B cell (primary cell): ENCODE measurements at regions of chr6 and their contacts with region 1.

Region 1: DNA sequence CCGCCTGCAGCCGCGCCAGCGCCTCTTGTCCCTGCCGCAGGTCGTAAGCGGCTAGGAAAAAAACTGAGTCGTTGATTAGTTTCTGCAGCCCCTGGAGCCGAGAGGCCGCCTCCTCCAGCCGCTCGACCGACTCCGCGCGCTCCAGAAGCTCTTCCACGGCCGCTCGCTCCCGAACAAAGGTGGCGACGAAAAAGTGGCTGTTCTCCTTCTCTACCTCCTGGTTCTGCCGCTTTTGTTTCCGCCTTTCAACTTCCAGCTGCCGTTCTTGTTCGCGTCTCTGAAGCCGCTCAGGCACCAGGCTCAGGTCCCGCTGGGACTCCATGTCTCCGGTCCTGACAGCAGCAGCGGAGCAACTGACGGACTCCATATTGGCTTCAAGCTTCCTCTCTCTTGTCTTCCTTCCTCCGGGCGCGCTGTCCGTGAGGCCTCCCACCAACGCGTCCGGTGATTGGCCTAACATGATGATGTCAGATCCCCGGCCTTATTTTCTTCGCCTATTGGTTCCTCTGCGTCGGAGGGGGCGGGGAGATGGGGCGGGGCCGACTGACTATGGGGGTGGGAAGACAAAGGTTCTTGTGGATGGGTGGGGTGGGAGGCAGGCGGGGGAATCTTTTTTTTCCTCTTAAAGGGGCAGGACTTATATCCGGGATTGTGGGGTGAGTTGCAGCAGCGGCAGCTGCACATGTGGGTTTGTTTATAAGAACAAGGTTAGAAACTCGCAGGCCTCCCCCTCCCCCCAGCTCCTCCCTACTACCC is at the start of gene TBCC:
- DNase-seq: peak; percentile 96
- ATAC-seq: peak; percentile 74
- H3K4me3 ChIP-seq: peak within 1 kb of the TSS; percentile 81 to 100 (median 90)
- H3K4me3 Mint-ChIP-seq: peak within 1 kb of the TSS; percentile 100
- H3K27ac ChIP-seq: peak within 1 kb of the TSS; percentile 78 to 91
- H3K27ac Mint-ChIP-seq: peak within 1 kb of the TSS; percentile 100
- H3K4me1 ChIP-seq: peaks cover 21 to 28% of the 10 kb centered on the region in 2 donors
- H3K4me1 Mint-ChIP-seq: peaks cover 35% of the 10 kb centered on the region
- H3K27me3 ChIP-seq: no peaks in the 10 kb centered on the region
- H3K27me3 Mint-ChIP-seq: no peaks in the 10 kb centered on the region
- CTCF ChIP-seq: no peak
- total RNA-seq, gene TBCC: 54.6 and 55.7 TPM in 2 replicates

Region 2: DNA sequence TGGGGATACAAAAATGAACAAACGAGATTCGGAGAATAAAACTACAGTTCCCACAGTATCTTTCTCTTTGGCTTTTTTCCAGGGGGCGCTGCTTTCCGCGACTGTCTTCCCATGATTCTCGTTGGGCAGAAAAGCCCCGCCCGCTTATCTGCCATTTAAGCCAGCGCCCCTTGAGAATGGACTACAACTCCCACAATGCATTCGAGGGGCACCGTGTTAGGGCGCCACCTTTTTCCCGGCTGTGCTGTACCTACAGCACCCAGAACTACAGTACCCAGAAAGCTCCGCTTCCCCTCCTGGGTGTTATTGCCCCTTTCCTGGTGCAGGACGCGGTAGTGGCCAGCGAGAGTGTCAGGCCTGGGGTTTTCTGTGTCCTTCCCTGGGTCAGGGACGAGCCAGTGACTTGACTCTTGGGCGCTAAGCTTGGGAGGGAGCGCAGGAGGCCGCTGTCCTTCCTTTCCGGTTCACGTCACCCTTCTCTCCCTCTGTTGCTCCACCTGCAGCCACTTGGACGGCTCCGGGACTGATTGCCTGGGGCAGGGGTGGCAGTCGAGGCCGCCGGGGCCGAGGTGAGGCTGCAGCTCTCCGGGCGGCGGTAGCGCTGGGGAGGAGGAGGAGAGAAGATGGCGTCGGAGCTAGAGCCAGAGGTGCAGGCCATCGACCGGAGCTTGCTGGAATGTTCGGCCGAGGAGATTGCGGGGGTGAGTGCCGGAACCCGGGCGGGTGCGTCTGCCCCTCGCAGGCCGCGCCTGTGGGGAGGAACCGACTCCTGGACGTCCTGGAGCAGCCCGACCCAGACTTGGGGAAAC is 182.0 kb before region 1 on chr6 and contains the start of gene UBR2:
- CTCF ChIA-PET with region 1: no interaction called
- POLR2A ChIA-PET with region 1: no interaction called
- intact Hi-C with region 1: loop called (anchors 2 kb)
- DNase-seq: peak; percentile 95
- ATAC-seq: peak; percentile 96
- H3K4me3 ChIP-seq: peak within 1 kb of the TSS; percentile 78 to 98 (median 91)
- H3K4me3 Mint-ChIP-seq: peak within 1 kb of the TSS; percentile 98
- H3K27ac ChIP-seq: peak within 1 kb of the TSS; percentile 90 to 91
- H3K27ac Mint-ChIP-seq: peak within 1 kb of the TSS; percentile 98
- H3K4me1 ChIP-seq: peaks cover 19 to 25% of the 10 kb centered on the region in 2 donors
- H3K4me1 Mint-ChIP-seq: peaks cover 36% of the 10 kb centered on the region
- H3K27me3 ChIP-seq: no peaks in the 10 kb centered on the region
- H3K27me3 Mint-ChIP-seq: no peaks in the 10 kb centered on the region
- CTCF ChIP-seq: peak; percentile 41
- total RNA-seq, gene UBR2: 56.2 and 61.5 TPM in 2 replicates

Region 3: DNA sequence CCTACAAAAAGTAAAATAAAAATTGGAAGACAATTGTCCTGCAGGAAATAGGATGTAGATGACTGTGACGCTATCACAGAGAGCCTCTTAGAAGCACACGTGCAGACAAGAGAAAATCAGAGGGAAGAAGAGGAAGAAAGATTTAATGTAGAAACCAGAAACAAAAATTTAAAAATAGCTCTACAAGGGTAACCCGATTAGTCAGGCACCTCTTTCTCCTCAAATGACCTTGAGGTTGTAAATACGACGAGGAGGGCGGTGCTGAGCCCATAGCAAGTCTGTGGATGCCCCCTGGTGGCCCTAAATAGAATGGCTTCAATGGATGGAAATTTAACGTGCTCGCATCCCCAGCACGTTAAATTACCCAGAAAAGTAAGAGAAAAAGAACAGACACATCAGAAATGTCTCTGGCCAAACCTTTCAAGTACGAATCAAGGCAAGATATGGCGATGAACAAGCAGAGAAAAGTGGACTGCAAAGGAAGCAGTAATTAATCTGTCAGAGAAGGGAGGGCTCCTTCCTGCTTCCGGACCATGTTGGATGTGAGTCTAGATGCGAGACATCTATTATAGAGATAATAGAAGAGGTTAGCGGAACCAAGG is 19.3 kb before region 1 on chr6:
- CTCF ChIA-PET with region 1: interaction called, 21 read pairs
- POLR2A ChIA-PET with region 1: interaction called, 38 read pairs
- intact Hi-C with region 1: loop called (anchors 1 kb)
- DNase-seq: peak; percentile 92
- ATAC-seq: peak; percentile 99
- H3K4me3 ChIP-seq: peak overlapping the region; percentile 57 to 76 (median 68)
- H3K4me3 Mint-ChIP-seq: peak overlapping the region; percentile 92
- H3K27ac ChIP-seq: peak overlapping the region; percentile 59 to 64
- H3K27ac Mint-ChIP-seq: peak overlapping the region; percentile 94
- H3K4me1 ChIP-seq: peaks cover 12 to 17% of the 10 kb centered on the region in 2 donors
- H3K4me1 Mint-ChIP-seq: peaks cover 19% of the 10 kb centered on the region
- H3K27me3 ChIP-seq: no peaks in the 10 kb centered on the region
- H3K27me3 Mint-ChIP-seq: no peaks in the 10 kb centered on the region
- CTCF ChIP-seq: peak; percentile 94

Region 4: DNA sequence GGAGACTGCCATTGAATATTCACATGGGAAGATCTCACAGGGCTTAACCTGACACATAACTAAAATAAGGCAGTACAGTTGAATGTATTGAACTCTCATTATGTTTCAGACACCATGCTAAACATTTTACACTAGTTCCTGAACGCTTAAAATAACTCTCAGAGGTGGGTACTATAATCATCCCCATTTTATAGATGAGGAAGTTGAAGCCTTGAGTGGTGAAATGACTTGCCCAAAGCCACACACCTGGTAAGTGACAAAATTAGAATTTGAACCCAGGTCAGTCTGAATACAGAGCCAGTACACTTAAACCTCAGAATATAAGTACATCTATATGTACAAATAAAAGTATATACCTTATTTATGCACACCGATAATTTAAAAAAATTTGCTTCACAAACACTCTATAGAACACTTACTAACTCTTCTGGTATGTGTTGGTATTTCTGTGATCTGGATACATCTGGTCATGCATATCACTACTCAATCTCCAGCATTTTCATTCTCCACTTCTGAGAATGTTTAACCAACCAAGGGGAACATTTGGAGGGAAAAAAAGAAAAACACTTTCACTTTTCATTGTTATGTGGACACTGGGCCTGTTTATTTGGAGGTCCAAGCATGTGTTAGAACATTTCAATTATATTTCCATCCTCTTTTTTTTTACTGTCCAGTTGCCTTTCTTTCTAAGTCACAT is 31.4 kb after region 1 on chr6:
- CTCF ChIA-PET with region 1: interaction called, 29 read pairs
- POLR2A ChIA-PET with region 1: interaction called, 426 read pairs
- intact Hi-C with region 1: loop called (anchors 1 kb)
- DNase-seq: peak; percentile 49
- ATAC-seq: no peak
- H3K4me3 ChIP-seq: no peak overlapping the region
- H3K4me3 Mint-ChIP-seq: peak overlapping the region; percentile 62
- H3K27ac ChIP-seq: peak overlapping the region; percentile 16 to 32
- H3K27ac Mint-ChIP-seq: peak overlapping the region; percentile 91
- H3K4me1 ChIP-seq: peaks cover 60 to 67% of the 10 kb centered on the region in 2 donors
- H3K4me1 Mint-ChIP-seq: peaks cover 67% of the 10 kb centered on the region
- H3K27me3 ChIP-seq: no peaks in the 10 kb centered on the region
- H3K27me3 Mint-ChIP-seq: no peaks in the 10 kb centered on the region
- CTCF ChIP-seq: no peak

Region 5: DNA sequence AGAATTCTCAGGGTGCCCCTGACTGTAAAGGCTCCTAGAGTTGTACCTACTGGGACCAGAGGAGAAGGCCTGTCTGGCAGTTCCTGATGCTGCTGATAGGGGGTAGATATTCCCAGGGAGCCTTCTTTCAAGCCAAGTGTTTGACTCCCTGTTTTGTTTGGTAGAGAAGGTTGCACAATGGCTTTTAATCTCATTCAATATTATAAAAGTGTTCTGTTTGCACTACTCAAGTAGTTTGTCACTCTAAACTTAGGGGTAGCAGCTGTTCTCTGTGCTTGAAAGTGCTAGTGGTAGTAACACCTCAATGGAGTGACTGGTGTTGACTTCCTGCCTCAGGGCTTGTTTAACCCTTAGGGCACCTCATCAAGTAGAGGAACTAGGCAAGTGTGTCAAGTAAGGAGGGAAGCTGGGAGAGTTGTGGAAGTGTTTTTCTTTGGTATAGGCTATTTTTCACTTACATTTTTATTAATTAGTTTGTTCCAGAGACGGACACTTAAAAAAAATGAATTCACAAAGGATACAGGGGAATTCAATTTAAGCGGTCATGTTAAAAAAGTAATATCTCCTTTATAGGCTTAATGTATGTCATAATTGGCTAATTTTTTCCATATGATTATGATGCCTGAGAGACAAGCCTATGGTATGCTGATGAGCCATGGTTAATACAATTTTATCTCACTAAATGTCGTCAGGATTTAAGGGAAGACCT is 74.1 kb after region 1 on chr6:
- CTCF ChIA-PET with region 1: no interaction called
- POLR2A ChIA-PET with region 1: interaction called, 11 read pairs
- intact Hi-C with region 1: loop called (anchors 2 kb)
- DNase-seq: peak; percentile 30
- ATAC-seq: peak; percentile 41
- H3K4me3 ChIP-seq: no peak overlapping the region
- H3K4me3 Mint-ChIP-seq: no peak overlapping the region
- H3K27ac ChIP-seq: peak overlapping the region in 1 of 2 donors; percentile 55
- H3K27ac Mint-ChIP-seq: peak overlapping the region; percentile 81
- H3K4me1 ChIP-seq: peaks cover 6 to 19% of the 10 kb centered on the region in 2 donors
- H3K4me1 Mint-ChIP-seq: peaks cover 26% of the 10 kb centered on the region
- H3K27me3 ChIP-seq: no peaks in the 10 kb centered on the region
- H3K27me3 Mint-ChIP-seq: no peaks in the 10 kb centered on the region
- CTCF ChIP-seq: no peak

Region 6: DNA sequence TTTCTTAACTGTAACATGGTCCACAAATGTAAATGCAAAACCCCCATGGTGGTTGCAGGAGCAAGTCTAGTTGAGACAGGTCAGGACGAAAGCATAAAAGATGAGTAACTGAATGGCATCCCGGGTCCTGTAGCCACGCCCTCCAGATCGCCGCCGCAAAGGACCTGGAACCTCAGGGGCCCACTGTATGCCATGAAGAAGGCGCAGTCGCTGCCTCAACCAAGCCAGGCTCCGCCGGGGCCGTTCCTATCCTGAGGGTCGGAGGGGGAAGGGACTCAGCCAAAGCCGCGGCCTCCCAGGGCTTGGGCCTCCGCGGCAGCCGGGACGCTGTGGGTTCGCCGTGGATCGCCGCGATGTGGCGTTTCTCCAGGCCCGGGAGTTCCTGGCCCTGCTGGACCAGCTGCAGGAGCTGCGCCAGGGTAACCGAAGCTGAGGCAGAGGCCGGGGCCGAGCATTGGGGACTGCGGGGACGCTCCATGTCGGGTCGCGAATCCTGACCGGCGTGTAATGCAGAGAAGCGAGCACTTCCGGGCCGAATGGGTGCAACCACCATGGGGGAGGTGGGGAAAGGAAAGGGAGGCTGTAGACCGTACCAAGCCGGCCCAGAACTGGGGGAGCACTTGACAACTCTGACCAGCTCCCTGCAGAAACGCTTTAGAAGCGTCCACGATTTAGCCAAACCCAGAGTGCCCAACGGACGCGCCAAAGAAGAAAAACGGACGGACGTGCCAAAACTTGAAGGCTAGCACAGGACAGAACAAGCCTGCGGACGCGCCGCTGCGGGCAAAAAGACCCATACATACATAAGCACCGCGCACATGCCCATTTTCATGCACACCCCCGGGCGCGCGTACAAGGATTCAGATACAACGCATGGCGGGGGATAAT is 144.7 kb after region 1 on chr6:
- CTCF ChIA-PET with region 1: interaction called, 3 read pairs
- POLR2A ChIA-PET with region 1: interaction called, 24 read pairs
- intact Hi-C with region 1: loop called (anchors 1 kb)
- DNase-seq: peak; percentile 93
- ATAC-seq: peak; percentile 98
- H3K4me3 ChIP-seq: peak overlapping the region; percentile 76 to 94 (median 87)
- H3K4me3 Mint-ChIP-seq: peak overlapping the region; percentile 92
- H3K27ac ChIP-seq: peak overlapping the region; percentile 77 to 89
- H3K27ac Mint-ChIP-seq: peak overlapping the region; percentile 92
- H3K4me1 ChIP-seq: peaks cover 26 to 33% of the 10 kb centered on the region in 2 donors
- H3K4me1 Mint-ChIP-seq: peaks cover 38% of the 10 kb centered on the region
- H3K27me3 ChIP-seq: no peaks in the 10 kb centered on the region
- H3K27me3 Mint-ChIP-seq: no peaks in the 10 kb centered on the region
- CTCF ChIP-seq: no peak